ENCODE measurements at regions of chr10 and their contacts with region 1.

Region 1: DNA sequence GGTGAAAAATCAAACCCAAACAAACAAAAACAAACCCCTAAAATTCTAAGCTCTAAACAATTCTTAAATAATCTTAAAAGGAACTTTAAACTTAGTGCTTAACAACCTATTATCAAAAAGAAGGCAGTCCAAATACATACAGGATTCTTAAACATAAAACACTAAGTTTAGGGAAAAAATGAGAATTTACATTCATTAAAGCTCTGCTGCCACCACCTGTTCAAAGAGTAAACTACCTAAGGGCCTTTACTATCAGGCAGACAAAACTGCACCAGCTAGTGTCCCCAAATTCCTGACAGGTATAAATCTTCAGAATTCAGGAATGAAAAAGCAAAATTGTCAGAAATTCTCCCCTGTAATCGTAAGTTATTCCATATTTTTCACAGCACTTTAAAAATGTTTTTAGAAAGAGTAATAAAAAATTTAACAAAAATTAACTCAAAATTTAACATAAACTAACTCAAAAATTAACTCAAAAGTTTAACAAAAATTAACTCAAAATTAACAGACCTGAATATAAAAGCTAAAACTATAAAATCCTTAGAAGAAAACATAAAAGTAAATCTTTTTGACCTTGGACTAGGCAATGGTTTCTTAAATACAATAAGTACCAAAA is 55.1 kb downstream of the PDZD8 start:
- DNase-seq: no peak
- H3K4me3 ChIP-seq: no peak overlapping the region
- H3K27ac ChIP-seq: no peak overlapping the region
- H3K4me1 ChIP-seq: peaks cover 0 to 14% (median 3%) of the 10 kb centered on the region in 4 experiments; a peak in 4 of 7 replicates
- H3K27me3 ChIP-seq: no peaks in the 10 kb centered on the region
- CTCF ChIP-seq: peak in 2 of 3 experiments; percentile 56 to 71; a peak in 3 of 4 replicates
- EP300 ChIP-seq: no peak
- POLR2A ChIP-seq: no peak
- RAD21 ChIP-seq: peak; percentile 69 to 79

Region 2: DNA sequence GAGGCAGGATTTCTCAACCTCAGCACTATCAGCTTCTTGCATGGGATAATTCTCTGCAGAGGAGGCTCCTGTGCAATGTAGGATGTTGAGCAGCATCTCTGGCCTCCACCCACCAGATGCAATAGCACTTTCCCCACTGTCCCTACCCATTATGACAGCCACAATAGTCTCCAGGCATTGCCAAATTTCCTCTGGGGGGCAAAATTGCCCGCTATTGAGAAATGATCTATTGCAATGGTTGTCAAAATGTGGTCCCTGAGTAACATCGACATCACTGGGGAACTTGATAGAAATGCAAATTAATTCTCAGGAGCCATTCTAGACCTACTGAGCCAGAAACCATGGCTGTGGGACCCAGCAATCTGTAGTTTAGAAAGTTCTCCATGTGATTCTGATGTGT is 115.8 kb before region 1 on chr10:
- CTCF ChIA-PET with region 1: interaction called, 11 read pairs
- POLR2A ChIA-PET with region 1: no interaction called
- DNase-seq: no peak
- H3K4me3 ChIP-seq: no peak overlapping the region
- H3K27ac ChIP-seq: no peak overlapping the region
- H3K4me1 ChIP-seq: 0 out of 7 replicates have a peak, but pooled peaks cover 0 to 4% (median 0%) of the 10 kb centered on the region in 4 experiments
- H3K27me3 ChIP-seq: peaks cover 0 to 1% (median 0%) of the 10 kb centered on the region in 4 experiments; a peak in 1 of 7 replicates
- CTCF ChIP-seq: no peak
- EP300 ChIP-seq: no peak
- POLR2A ChIP-seq: no peak
- RAD21 ChIP-seq: no peak

Region 3: DNA sequence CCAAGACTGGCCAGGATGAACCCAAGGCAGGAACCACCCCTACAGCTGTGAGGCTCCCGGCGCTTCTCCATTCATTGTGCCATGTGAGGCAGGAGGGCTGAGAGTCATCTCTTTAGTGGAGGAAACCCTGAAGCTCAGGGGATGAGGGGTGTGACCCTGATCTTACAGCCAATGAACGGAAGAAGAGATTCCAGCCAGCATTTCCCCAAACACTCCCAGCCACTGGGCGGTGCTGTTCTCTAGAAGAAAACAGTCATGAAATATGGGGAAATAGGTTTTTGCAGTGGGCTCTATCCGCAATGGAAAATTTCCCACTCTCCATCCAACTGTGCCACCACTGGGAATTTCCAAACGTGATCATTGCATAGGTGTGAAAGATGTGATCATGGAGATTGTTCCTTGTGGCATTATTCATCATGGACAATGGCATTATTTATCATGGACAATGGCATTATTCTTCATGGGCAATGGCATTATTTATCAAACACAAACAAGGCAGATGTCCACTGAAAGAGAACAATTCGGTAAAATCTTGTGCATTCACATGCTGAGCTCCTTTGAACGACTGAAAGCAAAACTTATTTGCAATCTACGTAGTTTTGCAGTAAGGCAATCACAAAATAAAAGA is 93.2 kb before region 1 on chr10:
- CTCF ChIA-PET with region 1: interaction called, 97 read pairs
- POLR2A ChIA-PET with region 1: no interaction called
- DNase-seq: peak in 1 of 2 experiments; percentile 65
- H3K4me3 ChIP-seq: no peak overlapping the region
- H3K27ac ChIP-seq: no peak overlapping the region
- H3K4me1 ChIP-seq: no peaks in the 10 kb centered on the region
- H3K27me3 ChIP-seq: no peaks in the 10 kb centered on the region
- CTCF ChIP-seq: peak; percentile 69 to 90 (median 80)
- EP300 ChIP-seq: no peak
- POLR2A ChIP-seq: no peak
- RAD21 ChIP-seq: peak; percentile 85 to 87

Region 4: DNA sequence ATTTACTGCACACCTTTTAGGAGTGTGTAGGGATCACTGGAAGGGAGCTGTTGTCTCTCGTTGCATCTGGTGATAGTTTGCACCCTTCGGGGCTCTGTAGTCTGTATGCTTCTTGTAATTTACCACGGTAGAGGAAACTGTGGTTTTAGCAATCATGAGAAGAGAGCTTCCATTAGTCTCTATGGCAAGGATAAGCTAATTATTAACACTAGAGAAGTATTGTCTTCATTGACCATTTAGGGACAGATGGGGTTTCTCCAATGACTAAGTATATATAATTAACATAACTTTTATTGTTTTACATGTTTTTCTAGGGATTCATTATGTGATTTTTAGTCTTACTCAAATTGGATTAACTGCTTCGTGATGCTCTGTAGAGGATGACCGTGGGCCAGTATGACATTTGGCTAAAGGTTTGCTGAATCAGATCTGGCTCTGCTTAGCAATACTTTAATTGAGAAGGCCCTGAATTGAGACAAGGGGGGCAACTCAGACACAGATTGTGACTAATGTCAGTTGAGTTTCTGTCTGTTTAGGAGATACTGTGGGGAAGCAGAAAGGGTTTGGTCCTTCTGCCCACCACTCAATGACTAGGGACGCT is 70.6 kb before region 1 on chr10:
- CTCF ChIA-PET with region 1: interaction called, 11 read pairs
- POLR2A ChIA-PET with region 1: no interaction called
- DNase-seq: no peak
- H3K4me3 ChIP-seq: no peak overlapping the region
- H3K27ac ChIP-seq: no peak overlapping the region
- H3K4me1 ChIP-seq: peaks cover 0 to 7% (median 1%) of the 10 kb centered on the region in 4 experiments; a peak in 4 of 7 replicates
- H3K27me3 ChIP-seq: no peaks in the 10 kb centered on the region
- CTCF ChIP-seq: no peak
- EP300 ChIP-seq: no peak
- POLR2A ChIP-seq: no peak
- RAD21 ChIP-seq: no peak

Region 5: DNA sequence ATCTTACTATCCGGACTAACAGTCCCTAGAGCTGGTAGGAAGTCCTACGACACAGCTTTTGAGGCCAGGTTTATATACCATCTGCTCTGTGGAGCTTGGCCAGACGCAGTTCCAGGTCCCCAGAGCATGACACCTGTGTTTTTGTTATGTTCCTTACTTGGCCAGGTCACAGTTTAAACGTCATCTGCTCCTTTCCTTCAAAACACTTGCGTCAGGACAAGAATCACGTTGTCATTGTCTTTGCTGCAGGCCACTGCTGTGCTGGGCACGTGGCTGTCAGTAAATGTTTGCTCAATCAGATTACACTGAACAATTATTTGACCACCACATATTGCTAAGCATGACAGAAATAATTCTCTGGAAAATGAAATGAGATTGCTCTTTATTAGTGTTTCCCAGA is 55.4 kb before region 1 on chr10:
- CTCF ChIA-PET with region 1: interaction called, 13 read pairs
- POLR2A ChIA-PET with region 1: no interaction called
- DNase-seq: no peak
- H3K4me3 ChIP-seq: no peak overlapping the region
- H3K27ac ChIP-seq: no peak overlapping the region
- H3K4me1 ChIP-seq: peaks cover 0 to 7% (median 3%) of the 10 kb centered on the region in 4 experiments; a peak in 4 of 7 replicates
- H3K27me3 ChIP-seq: no peaks in the 10 kb centered on the region
- CTCF ChIP-seq: no peak
- EP300 ChIP-seq: no peak
- POLR2A ChIP-seq: no peak
- RAD21 ChIP-seq: no peak

Region 6: DNA sequence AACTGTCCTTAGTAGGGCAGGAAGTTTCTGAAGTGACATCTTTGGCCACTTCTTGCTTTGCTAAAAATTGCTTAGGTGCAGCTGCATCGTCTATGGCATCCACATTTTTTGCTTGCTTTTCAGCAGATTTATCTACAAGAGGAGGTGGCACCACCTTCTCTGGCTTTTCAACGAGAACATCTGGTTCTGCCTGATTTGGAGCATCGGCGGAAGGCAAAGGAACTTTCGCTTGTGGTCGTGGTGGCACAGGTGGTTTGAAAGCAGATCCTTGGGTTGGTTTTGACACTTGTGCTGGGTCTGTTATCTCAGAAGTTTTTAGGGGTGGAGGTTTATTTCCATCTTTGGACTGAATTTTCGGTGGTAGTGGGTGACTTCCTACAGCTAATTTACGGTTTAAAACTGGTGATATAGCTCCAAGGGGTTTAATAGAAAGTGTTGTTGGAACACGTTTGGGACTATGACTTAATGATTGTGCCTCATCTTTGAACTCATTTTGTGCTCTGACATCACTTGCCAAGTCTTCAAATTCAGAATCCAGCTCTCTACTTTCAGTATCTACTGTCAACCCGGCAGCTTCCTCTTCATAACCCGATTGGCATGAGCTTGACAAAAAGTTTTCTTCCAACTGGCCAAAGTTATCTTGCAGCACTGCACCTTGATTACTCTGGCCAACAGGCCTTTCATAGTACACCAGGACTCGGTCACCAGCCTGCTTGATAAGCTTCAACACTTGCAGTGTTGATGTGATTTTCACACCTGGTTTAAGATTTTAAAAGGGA is 35.3 kb before region 1 on chr10:
- CTCF ChIA-PET with region 1: interaction called, 10 read pairs
- POLR2A ChIA-PET with region 1: no interaction called
- DNase-seq: no peak
- H3K4me3 ChIP-seq: no peak overlapping the region
- H3K27ac ChIP-seq: no peak overlapping the region
- H3K4me1 ChIP-seq: no peaks in the 10 kb centered on the region
- H3K27me3 ChIP-seq: no peaks in the 10 kb centered on the region
- CTCF ChIP-seq: no peak
- EP300 ChIP-seq: no peak
- POLR2A ChIP-seq: no peak
- RAD21 ChIP-seq: no peak

Region 7: GRCh38 chr10:117334066-117334465 is 13.9 kb after region 1 on chr10:
- CTCF ChIA-PET with region 1: interaction called, 13 read pairs
- POLR2A ChIA-PET with region 1: no interaction called
- DNase-seq: no peak
- H3K4me3 ChIP-seq: no peak overlapping the region
- H3K27ac ChIP-seq: no peak overlapping the region
- H3K4me1 ChIP-seq: no peaks in the 10 kb centered on the region
- H3K27me3 ChIP-seq: no peaks in the 10 kb centered on the region
- CTCF ChIP-seq: no peak
- EP300 ChIP-seq: no peak
- POLR2A ChIP-seq: no peak
- RAD21 ChIP-seq: no peak

Measured in H1 (cell line).